Ovary (tissue), 10 donors: ENCODE measurements at regions of chr13 and their contacts with region 1.

Region 1: GRCh38 chr13:32381539-32381938 is 46.4 kb downstream of the N4BP2L1 start:
- DNase-seq: peak in 2 of 5 donors; percentile 14 to 33
- H3K4me3 ChIP-seq: no peak overlapping the region
- H3K27ac ChIP-seq: no peak overlapping the region
- H3K4me1 ChIP-seq: peaks cover 1% of the 10 kb centered on the region
- H3K27me3 ChIP-seq: no peaks in the 10 kb centered on the region
- CTCF ChIP-seq: peak; percentile 35 to 62 (median 59)
- EP300 ChIP-seq: no peak
- POLR2A ChIP-seq: no peak

Region 2: DNA sequence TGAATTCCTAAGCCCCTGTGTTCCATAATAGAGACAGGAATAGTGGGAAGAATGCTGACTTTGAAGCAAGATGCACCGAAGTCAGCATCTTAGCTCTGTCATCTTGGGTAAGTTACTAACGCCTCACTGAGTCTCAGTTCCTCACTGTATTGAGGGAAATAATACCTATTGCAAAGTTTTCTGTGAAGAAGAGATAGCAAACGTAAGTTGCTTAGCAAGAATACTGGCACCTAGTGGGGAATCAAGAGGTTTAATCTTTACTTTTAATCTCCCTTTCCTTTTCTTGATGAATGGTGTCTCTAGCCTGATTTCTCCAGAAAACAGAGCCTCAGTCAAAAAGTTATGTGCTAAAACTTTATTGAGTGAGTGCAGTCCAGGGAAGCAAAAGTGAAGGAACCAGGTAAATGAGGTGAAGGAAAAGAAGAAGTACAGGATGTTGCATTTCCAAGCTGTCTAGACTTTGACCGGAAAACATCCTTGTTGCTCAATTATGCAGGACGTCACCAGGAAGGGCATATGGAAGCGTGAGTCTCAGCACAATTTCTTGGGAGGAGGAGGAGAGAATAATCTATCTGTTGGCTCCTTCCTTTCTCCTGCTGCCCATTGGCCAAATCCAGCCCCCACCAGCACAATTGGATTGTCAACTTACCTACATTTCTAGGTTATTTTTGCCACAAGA is 971.7 kb before region 1 on chr13:
- intact Hi-C with region 1: no loop called
- DNase-seq: no peak
- H3K4me3 ChIP-seq: no peak overlapping the region
- H3K27ac ChIP-seq: no peak overlapping the region
- H3K4me1 ChIP-seq: no peaks in the 10 kb centered on the region
- H3K27me3 ChIP-seq: no peaks in the 10 kb centered on the region
- CTCF ChIP-seq: no peak
- EP300 ChIP-seq: no peak
- POLR2A ChIP-seq: no peak

Region 3: GRCh38 chr13:32267836-32268439 is 113.6 kb before region 1 on chr13:
- intact Hi-C with region 1: no loop called
- DNase-seq: no peak
- H3K4me3 ChIP-seq: no peak overlapping the region
- H3K27ac ChIP-seq: no peak overlapping the region
- H3K4me1 ChIP-seq: no peaks in the 10 kb centered on the region
- H3K27me3 ChIP-seq: no peaks in the 10 kb centered on the region
- CTCF ChIP-seq: no peak
- EP300 ChIP-seq: no peak
- POLR2A ChIP-seq: no peak

Region 4: GRCh38 chr13:32548837-32549236 is 167.3 kb after region 1 on chr13:
- intact Hi-C with region 1: loop called in 2 of 4 experiments (anchors 5 to 10 kb)
- DNase-seq: no peak
- H3K4me3 ChIP-seq: no peak overlapping the region
- H3K27ac ChIP-seq: no peak overlapping the region
- H3K4me1 ChIP-seq: no peaks in the 10 kb centered on the region
- H3K27me3 ChIP-seq: no peaks in the 10 kb centered on the region
- CTCF ChIP-seq: no peak
- EP300 ChIP-seq: no peak
- POLR2A ChIP-seq: no peak

Region 5: GRCh38 chr13:32581177-32581786 is 199.7 kb after region 1 on chr13:
- intact Hi-C with region 1: loop called in 1 of 4 experiments (anchors 5 kb)
- DNase-seq: no peak
- H3K4me3 ChIP-seq: no peak overlapping the region
- H3K27ac ChIP-seq: no peak overlapping the region
- H3K4me1 ChIP-seq: peaks cover 2% of the 10 kb centered on the region
- H3K27me3 ChIP-seq: no peaks in the 10 kb centered on the region
- CTCF ChIP-seq: no peak
- EP300 ChIP-seq: no peak
- POLR2A ChIP-seq: no peak